Tibial artery (tissue), 4 donors: ENCODE measurements at regions of chr12 and their contacts with region 1.

Region 1: GRCh38 chr12:20369305-20370005 is 1.1 kb downstream of the PDE3A start:
- DNase-seq: peak; percentile 80 to 91
- H3K4me3 ChIP-seq: peak overlapping the region; percentile 71 to 89
- H3K27ac ChIP-seq: peak overlapping the region; percentile 90 to 91
- H3K4me1 ChIP-seq: peaks cover 0 to 10% (median 2%) of the 10 kb centered on the region in 4 donors
- H3K27me3 ChIP-seq: no peaks in the 10 kb centered on the region
- CTCF ChIP-seq: peak; percentile 47 to 49

Region 2: DNA sequence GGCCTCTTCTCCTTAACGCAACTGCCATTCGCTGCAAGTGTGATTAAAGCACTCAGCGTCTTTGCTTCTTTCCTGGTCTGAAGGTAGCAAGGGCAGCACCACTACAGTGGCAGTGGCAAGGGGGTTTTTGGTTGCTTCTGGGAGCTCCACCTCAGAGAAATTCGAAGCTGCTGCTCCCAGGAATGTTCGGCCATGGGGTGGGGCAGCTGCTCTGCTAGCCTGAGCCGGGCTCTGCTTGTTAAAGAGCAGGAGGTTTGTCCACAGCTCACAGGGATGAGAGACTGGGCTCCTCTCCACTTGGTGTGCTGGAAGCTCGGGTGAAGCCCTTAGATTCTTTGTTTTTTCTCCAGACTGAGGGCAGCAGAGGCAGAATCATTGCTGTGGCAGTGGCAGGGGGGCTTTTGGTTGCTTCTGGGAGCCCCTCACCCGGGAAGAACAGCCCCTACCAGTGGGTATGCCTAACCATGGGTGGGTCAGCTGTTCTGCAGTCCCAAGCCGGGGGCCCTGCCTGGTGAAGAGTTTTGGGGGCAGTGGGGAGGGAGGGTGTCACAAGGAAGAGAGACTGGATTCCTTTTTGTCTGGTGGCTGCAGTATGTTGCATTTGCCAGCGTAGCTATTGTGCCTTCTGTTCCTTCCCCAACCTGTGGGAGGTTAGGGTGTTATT is 589.9 kb before region 1 on chr12:
- intact Hi-C with region 1: loop called (anchors 10 kb)
- DNase-seq: peak in 1 of 2 donors; percentile 79
- H3K4me3 ChIP-seq: peak overlapping the region; percentile 49 to 58
- H3K27ac ChIP-seq: peak overlapping the region; percentile 84 to 86
- H3K4me1 ChIP-seq: peaks cover 0 to 48% (median 21%) of the 10 kb centered on the region in 4 donors
- H3K27me3 ChIP-seq: no peaks in the 10 kb centered on the region
- CTCF ChIP-seq: peak in 1 of 2 experiments; percentile 29

Region 3: GRCh38 chr12:20248646-20249045 is 120.8 kb before region 1 on chr12:
- intact Hi-C with region 1: no loop called
- DNase-seq: no peak
- H3K4me3 ChIP-seq: no peak overlapping the region
- H3K27ac ChIP-seq: no peak overlapping the region
- H3K4me1 ChIP-seq: no peaks in the 10 kb centered on the region
- H3K27me3 ChIP-seq: no peaks in the 10 kb centered on the region
- CTCF ChIP-seq: no peak

Region 4: DNA sequence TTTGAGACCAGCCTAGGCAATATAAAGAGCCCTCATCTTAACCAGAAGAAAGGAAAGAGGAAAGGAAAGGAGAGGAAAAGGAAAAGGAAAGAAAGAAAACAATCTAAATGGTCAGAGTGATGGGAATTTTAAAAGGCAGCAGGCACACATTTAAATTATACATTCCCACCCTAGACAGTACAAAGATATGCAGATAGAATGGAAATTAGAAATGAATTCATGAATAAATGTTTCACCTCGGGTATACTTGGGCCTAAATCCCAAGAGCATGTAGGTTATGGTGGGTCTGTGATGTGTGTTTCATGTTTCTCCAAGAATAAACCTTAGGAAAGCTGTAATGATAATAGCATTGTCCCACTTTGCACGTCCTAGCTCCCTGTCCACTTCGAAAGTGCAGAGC is 221.1 kb after region 1 on chr12:
- intact Hi-C with region 1: no loop called
- DNase-seq: no peak
- H3K4me3 ChIP-seq: no peak overlapping the region
- H3K27ac ChIP-seq: no peak overlapping the region
- H3K4me1 ChIP-seq: peaks cover 0 to 42% (median 3%) of the 10 kb centered on the region in 4 donors
- H3K27me3 ChIP-seq: no peaks in the 10 kb centered on the region
- CTCF ChIP-seq: no peak

Region 5: DNA sequence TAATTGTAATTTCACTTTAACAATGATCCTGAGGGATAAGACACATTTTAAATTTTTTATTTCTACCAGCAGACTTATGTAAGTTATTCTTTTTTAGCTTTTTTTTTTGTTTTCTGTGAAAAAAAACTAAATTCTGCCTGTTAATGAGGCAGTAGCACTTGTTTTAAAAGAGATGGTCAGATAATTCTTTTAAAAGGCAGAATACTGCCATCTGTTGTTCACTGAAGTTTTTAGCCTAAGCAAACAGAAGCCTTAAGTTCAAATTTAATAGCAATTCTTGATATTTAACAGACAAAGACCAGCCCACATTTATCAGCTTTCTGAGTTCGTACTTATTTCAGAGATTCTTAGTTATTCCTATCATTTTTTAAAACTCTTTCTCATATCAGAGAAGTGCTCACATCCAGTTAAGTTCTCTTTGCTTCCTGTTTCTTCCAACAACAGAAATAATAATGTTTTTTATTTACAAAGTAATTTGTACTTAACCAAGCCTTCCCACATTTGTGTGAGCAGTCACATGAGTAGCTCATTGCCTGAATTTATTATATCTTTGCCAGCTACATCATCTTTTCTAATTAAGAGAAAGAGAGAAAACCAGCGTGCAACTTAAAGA is 232.3 kb after region 1 on chr12:
- intact Hi-C with region 1: loop called (anchors 10 kb)
- DNase-seq: no peak
- H3K4me3 ChIP-seq: no peak overlapping the region
- H3K27ac ChIP-seq: peak overlapping the region; percentile 61 to 67
- H3K4me1 ChIP-seq: peaks cover 0 to 57% (median 24%) of the 10 kb centered on the region in 4 donors
- H3K27me3 ChIP-seq: no peaks in the 10 kb centered on the region
- CTCF ChIP-seq: peak; percentile 51 to 56